Mucosa of descending colon (tissue), 3 donors: ENCODE measurements at regions of chr1 and their contacts with region 1.

Region 1: DNA sequence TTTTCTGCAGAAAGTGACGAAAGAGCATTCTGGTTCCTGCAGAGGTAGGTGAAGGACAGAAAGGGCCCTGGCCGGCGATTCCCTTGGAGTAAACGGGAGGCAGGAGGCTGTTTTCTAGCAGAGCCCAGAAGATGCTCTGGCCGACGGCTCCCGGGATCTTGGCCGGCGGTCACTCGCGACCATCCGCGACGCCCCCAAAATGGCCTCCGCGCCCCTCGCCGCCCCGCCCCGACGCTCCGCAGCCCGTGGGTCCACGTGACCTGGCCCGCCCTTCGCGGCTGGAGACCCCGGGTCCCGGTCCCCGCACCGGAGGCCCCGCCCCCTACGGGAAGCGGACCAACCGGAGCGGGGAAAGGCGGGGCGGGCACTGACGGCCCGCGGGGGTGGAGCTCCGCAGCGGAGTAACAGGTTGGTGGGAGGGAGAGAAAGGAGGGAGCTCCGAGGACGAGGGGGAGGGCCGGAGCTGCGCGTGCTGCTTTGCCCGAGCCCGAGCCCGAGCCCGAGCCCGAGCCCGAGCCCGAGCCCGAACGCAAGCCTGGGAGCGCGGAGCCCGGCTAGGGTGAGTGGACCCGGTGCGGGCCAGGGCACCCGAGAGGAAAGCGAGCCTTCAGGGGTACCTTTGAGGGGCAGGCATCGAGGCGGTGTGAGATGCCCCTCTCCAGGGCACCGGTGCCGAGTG is at the start of gene CGN:
- DNase-seq: peak; percentile 91 to 94 (median 94)
- ATAC-seq: peak; percentile 77
- H3K4me3 ChIP-seq: peak within 1 kb of the TSS; percentile 35
- H3K4me1 ChIP-seq: peaks cover 12% of the 10 kb centered on the region
- CTCF ChIP-seq: no peak
- total RNA-seq, gene CGN: 125 to 247 (median 187) TPM

Region 2: GRCh38 chr1:151443846-151444782 is 67.0 kb before region 1 on chr1:
- intact Hi-C with region 1: loop called in 1 of 2 experiments (anchors 10 kb)
- DNase-seq: peak in 1 of 3 donors; percentile 93
- ATAC-seq: peak; percentile 98
- H3K4me3 ChIP-seq: no peak overlapping the region
- H3K4me1 ChIP-seq: peaks cover 10% of the 10 kb centered on the region
- CTCF ChIP-seq: peak; percentile 65

Region 3: GRCh38 chr1:151594143-151594625 is 83.1 kb after region 1 on chr1:
- intact Hi-C with region 1: no loop called
- DNase-seq: peak; percentile 87 to 95 (median 87)
- ATAC-seq: peak; percentile 99
- H3K4me3 ChIP-seq: no peak overlapping the region
- H3K4me1 ChIP-seq: peaks cover 4% of the 10 kb centered on the region
- CTCF ChIP-seq: peak; percentile 97